Gastrocnemius medialis (tissue), 4 donors: ENCODE measurements at regions of chr9 and their contacts with region 1.

Region 1: GRCh38 chr9:32045513-32045912 is 338.9 kb upstream of the ACO1 start:
- DNase-seq: no peak
- ATAC-seq: no peak
- H3K4me3 ChIP-seq: no peak overlapping the region
- H3K27ac ChIP-seq: no peak overlapping the region
- H3K4me1 ChIP-seq: no peaks in the 10 kb centered on the region
- H3K27me3 ChIP-seq: no peaks in the 10 kb centered on the region
- CTCF ChIP-seq: no peak
- POLR2A ChIP-seq: no peak

Region 2: DNA sequence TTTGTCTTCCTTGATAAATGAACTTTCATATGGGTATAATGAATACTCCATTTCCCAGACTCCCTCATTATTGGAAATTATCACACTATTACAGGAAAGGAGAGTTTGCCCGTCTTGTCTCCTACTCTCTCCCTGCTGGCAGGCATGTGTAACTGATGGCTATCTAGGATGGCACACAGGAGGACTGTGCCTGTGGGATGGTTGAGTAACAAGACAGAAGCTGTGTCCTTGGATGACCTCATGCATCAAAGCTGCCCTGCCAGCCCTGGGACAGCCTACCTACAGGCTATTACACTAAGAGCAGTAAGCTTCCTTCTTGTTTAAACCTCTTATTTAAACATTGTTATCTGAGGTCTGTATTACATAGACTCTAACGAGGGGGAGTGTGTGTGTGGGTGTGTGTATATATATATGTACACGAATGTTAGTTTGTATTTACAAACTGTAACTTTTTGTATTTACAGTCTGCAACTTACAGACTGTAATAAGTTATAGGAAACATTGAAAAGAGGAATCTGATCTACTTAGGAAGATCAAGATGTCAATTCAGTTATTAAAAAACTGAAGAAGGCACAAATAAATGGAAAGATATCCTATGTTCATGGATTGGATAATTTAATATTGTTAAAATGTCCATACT is 91.3 kb after region 1 on chr9:
- in situ Hi-C with region 1: loop called in 1 of 4 experiments (anchors 25 kb)
- intact Hi-C with region 1: no loop called
- DNase-seq: no peak
- ATAC-seq: no peak
- H3K4me3 ChIP-seq: no peak overlapping the region
- H3K27ac ChIP-seq: no peak overlapping the region
- H3K4me1 ChIP-seq: no peaks in the 10 kb centered on the region
- H3K27me3 ChIP-seq: no peaks in the 10 kb centered on the region
- CTCF ChIP-seq: no peak
- POLR2A ChIP-seq: no peak

Region 3: GRCh38 chr9:32300373-32300772 is 254.9 kb after region 1 on chr9:
- in situ Hi-C with region 1: no loop called
- intact Hi-C with region 1: no loop called
- DNase-seq: no peak
- ATAC-seq: no peak
- H3K4me3 ChIP-seq: no peak overlapping the region
- H3K27ac ChIP-seq: no peak overlapping the region
- H3K4me1 ChIP-seq: no peaks in the 10 kb centered on the region
- H3K27me3 ChIP-seq: no peaks in the 10 kb centered on the region
- CTCF ChIP-seq: no peak
- POLR2A ChIP-seq: no peak